AG04450 (cell line): ENCODE measurements at regions of chr12 and their contacts with region 1.

Region 1: DNA sequence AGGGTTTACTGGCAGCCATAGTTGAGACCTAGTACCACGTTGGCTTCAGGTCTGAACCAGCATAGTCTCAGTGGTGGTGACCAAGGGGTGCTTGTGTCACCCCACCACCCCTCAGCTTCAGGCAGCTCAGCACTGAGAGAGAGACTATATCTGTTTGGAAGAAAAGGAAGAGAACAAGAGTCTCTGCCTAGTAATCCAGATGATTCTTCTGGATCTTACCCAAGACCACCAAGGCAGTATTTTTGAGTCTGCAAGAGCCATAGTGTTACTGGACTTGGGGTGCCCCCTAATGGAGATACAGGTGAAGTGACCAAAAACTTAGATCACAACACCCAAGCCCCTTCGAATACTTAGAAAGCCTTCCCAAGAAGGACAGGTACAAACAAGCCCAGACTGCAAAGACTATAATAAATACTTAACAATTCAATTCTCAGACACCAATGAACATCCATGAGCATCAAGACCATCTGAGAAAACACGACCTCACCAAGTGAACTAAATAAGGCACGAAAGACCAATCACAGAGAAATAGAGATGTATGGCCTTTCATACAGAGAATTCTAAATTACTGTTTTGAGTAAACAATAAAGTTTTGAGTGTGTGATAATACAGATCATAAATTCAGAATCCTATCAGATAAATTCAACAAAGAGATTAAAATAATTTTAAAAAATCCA is 107.0 kb downstream of the HELB start:
- DNase-seq: peak; percentile 61
- H3K4me3 ChIP-seq: no peak overlapping the region
- H3K27ac ChIP-seq: no peak overlapping the region
- H3K27me3 ChIP-seq: no peaks in the 10 kb centered on the region
- CTCF ChIP-seq: peak; percentile 82

Region 2: GRCh38 chr12:66269757-66270383 is 139.5 kb before region 1 on chr12:
- CTCF ChIA-PET with region 1: interaction called, 45 read pairs
- POLR2A ChIA-PET with region 1: no interaction called
- DNase-seq: peak; percentile 20
- H3K4me3 ChIP-seq: no peak overlapping the region
- H3K27ac ChIP-seq: no peak overlapping the region
- H3K27me3 ChIP-seq: peaks cover 13% of the 10 kb centered on the region
- CTCF ChIP-seq: peak; percentile 80

Region 3: GRCh38 chr12:66279123-66279712 is 130.1 kb before region 1 on chr12:
- CTCF ChIA-PET with region 1: interaction called, 23 read pairs
- POLR2A ChIA-PET with region 1: no interaction called
- DNase-seq: no peak
- H3K4me3 ChIP-seq: no peak overlapping the region
- H3K27ac ChIP-seq: no peak overlapping the region
- H3K27me3 ChIP-seq: peaks cover 10% of the 10 kb centered on the region
- CTCF ChIP-seq: peak; percentile 78

Region 4: GRCh38 chr12:66301944-66302826 is 107.1 kb before region 1 on chr12 and contains the start of gene HELB:
- CTCF ChIA-PET with region 1: interaction called, 14 read pairs
- POLR2A ChIA-PET with region 1: no interaction called
- DNase-seq: peak; percentile 87
- H3K4me3 ChIP-seq: peak within 1 kb of the TSS; percentile 99
- H3K27ac ChIP-seq: peak within 1 kb of the TSS; percentile 80
- H3K27me3 ChIP-seq: peaks cover 2% of the 10 kb centered on the region
- CTCF ChIP-seq: no peak
- polyA plus RNA-seq, gene HELB: 2.0 TPM in 2 replicates